Activated CD8-positive, alpha-beta memory T cell treated with anti-CD3 and anti-CD28 coated beads, Interleukin-2, amount 10 ng/mL, durations not matched to agents 7 days and 5 days (primary cell): ENCODE measurements at regions of chr12 and their contacts with region 1.

Region 1: DNA sequence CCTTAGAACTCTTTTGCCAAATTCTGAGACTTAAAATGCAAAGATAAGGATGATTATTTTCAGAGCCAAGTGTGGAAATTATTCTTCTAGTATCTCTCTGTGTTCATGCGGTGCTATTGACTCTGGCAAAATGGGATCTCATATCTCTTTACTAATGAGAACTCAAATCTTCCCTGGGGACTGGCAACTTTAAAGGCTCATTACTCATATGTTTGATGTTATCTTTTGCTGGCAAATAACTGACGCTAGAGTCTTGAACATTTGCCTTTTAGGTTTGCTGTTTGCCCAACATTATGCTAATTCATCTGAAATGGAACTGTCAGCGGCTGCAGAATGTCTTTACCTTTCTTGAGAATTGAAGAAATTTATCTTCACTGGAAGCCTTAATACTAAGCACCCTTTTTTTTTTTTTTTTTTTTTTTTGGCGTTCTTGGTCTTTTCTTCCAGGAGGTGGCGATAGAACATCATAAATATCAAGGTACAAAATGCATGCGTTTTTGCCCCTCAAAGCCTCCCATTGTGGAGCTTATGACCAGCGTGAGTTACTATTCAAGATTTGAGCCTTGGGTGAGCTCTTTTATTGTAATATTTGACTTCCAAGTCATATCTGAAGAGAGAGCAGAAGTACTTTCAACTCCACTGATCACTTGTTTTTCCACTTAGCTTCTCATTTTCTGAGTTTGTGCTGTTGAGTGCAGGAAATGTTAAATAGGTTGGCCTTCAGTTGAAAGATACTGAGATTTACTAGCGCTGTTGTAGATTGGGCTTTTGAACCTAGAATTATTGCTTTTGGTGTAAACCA is 86.6 kb downstream of the CAND1 start:
- DNase-seq: no peak
- ATAC-seq: peak; percentile 57
- H3K4me3 Mint-ChIP-seq: no peak overlapping the region
- H3K27ac Mint-ChIP-seq: no peak overlapping the region
- H3K4me1 Mint-ChIP-seq: peaks cover 21% of the 10 kb centered on the region
- H3K27me3 Mint-ChIP-seq: no peaks in the 10 kb centered on the region

Region 2: DNA sequence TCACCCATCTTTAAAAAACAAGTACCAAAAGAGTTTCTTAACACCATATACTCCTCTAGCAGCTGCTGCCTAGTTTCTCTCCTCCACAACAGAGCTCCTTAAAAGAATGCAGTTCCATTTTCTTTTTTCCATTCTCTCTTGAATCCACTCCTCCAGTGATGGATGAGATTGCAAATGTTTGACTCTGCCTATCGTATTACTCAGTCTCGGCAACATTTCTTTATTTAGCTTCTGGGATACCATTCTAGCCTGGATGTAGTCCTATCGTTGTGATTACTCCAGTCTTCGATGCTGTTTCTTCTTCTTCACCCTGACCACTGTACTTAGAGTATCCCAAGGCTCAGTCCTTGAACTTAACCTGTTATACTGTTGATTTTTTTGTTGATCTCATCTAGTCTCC is 55.9 kb before region 1 on chr12:
- CTCF ChIA-PET with region 1: no interaction called
- DNase-seq: no peak
- ATAC-seq: no peak
- H3K4me3 Mint-ChIP-seq: no peak overlapping the region
- H3K27ac Mint-ChIP-seq: no peak overlapping the region
- H3K4me1 Mint-ChIP-seq: no peaks in the 10 kb centered on the region
- H3K27me3 Mint-ChIP-seq: no peaks in the 10 kb centered on the region

Region 3: DNA sequence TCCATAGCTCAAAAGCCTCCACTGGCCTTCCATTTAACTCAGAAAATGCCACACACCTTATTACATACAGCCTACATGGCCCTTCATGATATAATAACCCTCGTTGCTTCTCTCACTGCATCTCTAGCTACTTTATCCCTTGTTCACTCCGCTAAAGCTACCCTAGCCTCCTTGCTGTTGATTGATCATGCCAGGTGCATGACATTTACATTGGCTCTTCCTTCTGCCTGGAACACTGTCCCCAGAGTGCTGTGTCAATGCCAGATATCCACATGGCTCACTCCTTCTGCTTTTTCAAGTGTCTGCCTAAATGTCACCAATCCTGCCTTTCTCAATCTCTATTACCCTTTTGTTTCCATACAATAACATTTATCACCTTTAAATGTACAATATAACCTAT is 28.3 kb before region 1 on chr12:
- CTCF ChIA-PET with region 1: no interaction called
- DNase-seq: no peak
- ATAC-seq: no peak
- H3K4me3 Mint-ChIP-seq: no peak overlapping the region
- H3K27ac Mint-ChIP-seq: no peak overlapping the region
- H3K4me1 Mint-ChIP-seq: peaks cover 5% of the 10 kb centered on the region
- H3K27me3 Mint-ChIP-seq: no peaks in the 10 kb centered on the region

Region 4: GRCh38 chr12:67344979-67345710 is 10.6 kb before region 1 on chr12:
- CTCF ChIA-PET with region 1: interaction called, 11 read pairs
- DNase-seq: no peak
- ATAC-seq: no peak
- H3K4me3 Mint-ChIP-seq: no peak overlapping the region
- H3K27ac Mint-ChIP-seq: no peak overlapping the region
- H3K4me1 Mint-ChIP-seq: no peaks in the 10 kb centered on the region
- H3K27me3 Mint-ChIP-seq: no peaks in the 10 kb centered on the region

Region 5: DNA sequence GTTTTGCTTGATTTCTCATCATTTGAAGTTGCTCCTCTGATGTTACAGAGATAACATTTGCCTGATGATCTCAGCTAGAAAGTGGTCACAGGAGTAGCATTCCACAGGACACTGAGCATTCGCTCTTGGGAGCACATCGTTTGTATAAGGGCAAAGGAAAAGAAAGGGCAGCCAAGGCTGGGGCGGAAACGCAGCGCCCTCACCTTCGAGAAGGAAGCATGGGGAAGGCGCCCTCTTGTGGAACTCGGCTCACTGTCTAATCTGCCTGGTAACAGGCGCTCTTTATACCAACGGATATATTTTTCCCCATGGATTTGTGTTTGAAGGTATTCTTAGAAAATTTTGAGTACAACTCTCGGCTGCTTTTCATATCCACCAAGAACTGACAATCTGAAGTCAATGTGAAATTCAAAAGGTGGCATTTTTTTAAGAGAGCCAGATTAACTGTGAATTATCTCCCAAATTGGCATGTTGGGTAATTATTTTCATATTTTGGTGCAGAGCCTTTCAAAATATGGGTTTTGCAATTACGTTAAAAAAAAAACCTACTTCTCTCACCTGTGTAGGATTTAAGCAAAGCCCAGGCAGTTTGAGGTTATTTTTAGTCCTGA is 86.1 kb after region 1 on chr12:
- CTCF ChIA-PET with region 1: interaction called, 16 read pairs
- DNase-seq: peak; percentile 80
- ATAC-seq: peak; percentile 82
- H3K4me3 Mint-ChIP-seq: no peak overlapping the region
- H3K27ac Mint-ChIP-seq: no peak overlapping the region
- H3K4me1 Mint-ChIP-seq: peaks cover 3% of the 10 kb centered on the region
- H3K27me3 Mint-ChIP-seq: no peaks in the 10 kb centered on the region

Region 6: GRCh38 chr12:67482751-67483671 is 127.2 kb after region 1 on chr12:
- CTCF ChIA-PET with region 1: no interaction called
- DNase-seq: peak; percentile 76
- ATAC-seq: peak; percentile 87
- H3K4me3 Mint-ChIP-seq: no peak overlapping the region
- H3K27ac Mint-ChIP-seq: peak overlapping the region; percentile 27
- H3K4me1 Mint-ChIP-seq: peaks cover 31% of the 10 kb centered on the region
- H3K27me3 Mint-ChIP-seq: no peaks in the 10 kb centered on the region

Region 7: DNA sequence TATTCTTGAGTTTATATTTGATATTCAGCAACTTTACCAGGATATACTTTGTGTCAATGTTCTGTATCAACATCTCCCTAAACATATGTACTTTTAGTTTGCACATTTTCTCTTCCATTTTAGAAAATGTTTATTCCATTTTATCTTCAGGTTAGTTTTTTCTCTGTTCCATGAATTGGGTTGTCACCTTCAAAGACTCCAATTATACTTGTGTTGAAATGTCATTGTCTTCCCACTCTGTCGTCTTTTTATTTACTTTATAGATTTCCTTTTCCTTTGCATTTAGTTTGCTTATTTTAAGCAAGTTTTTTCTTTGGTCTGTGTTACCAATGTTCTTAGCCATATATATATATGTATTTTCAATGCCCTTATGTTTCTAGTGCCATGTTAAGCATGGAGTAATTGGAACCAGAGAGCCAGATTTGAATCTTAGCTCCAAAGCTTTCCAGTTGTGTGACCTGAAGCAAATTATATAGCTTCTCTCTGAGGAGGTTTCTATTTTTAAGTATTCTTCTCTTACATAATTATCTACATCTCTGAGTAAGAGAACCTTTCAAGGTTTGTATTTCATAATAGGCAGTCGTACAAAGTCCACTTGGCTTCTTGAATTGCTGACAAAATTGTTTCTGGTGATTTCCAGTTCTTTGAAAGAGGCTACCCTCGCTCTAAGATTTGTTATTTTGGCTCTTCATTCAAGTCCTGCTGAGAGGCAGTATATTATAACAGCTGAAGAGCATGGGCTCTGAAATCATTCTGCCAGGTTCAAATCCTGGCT is 206.9 kb after region 1 on chr12:
- CTCF ChIA-PET with region 1: no interaction called
- DNase-seq: no peak
- ATAC-seq: no peak
- H3K4me3 Mint-ChIP-seq: no peak overlapping the region
- H3K27ac Mint-ChIP-seq: no peak overlapping the region
- H3K4me1 Mint-ChIP-seq: no peaks in the 10 kb centered on the region
- H3K27me3 Mint-ChIP-seq: no peaks in the 10 kb centered on the region